K562 (cell line): ENCODE measurements at regions of chr2 and their contacts with region 1.

Region 1: DNA sequence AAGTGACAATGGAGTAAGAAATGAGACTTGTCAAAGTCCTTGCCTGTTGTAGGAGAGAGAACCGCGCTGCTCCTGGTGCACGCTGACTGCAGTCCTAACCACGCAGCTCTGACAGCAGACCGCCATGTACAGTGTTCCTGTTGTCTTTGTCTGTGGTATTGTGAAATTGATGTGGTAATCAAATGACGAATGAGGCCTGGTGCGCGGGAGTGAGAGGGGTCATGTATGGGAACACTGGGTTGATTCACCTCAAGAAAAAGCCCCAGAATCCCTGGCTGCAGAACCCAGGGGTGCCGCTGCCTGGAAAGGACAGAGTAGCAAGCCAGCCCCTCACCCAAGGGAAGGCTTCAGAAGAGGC is 64.0 kb downstream of the INPP4A start:
- DNase-seq: peak; percentile 44 to 71 (median 50)
- ATAC-seq: peak; percentile 66
- H3K4me3 ChIP-seq: peak overlapping the region; percentile 17; the same call in 1 of the 2 replicates
- H3K27ac ChIP-seq: peak overlapping the region; percentile 93
- H3K4me1 ChIP-seq: peaks cover 54 to 66% of the 10 kb centered on the region in 2 experiments
- H3K27me3 ChIP-seq: no peaks in the 10 kb centered on the region
- CTCF ChIP-seq: no peak
- EP300 ChIP-seq: no peak
- POLR2A ChIP-seq: no peak
- RAD21 ChIP-seq: no peak

Region 2: GRCh38 chr2:98444436-98445176 is 64.1 kb before region 1 on chr2 and contains the start of gene INPP4A:
- CTCF ChIA-PET with region 1: no interaction called
- POLR2A ChIA-PET with region 1: no interaction called
- in situ Hi-C with region 1: no loop called
- intact Hi-C with region 1: loop called (anchors 5 kb)
- DNase-seq: peak; percentile 83 to 95 (median 94)
- ATAC-seq: peak; percentile 85
- H3K4me3 ChIP-seq: peak within 1 kb of the TSS; percentile 66
- H3K27ac ChIP-seq: peak within 1 kb of the TSS; percentile 57; the same call in 2 of the 3 replicates
- H3K4me1 ChIP-seq: peaks cover 16 to 27% of the 10 kb centered on the region in 2 experiments; a peak in 4 of 5 replicates
- H3K27me3 ChIP-seq: no peaks in the 10 kb centered on the region
- CTCF ChIP-seq: peak in 1 of 3 experiments; percentile 39; a peak in 1 of 6 replicates
- EP300 ChIP-seq: no peak
- POLR2A ChIP-seq: 0 out of 2 replicates have a peak, but pooled peaks have one; percentile 42
- RAD21 ChIP-seq: peak in 1 of 2 experiments; percentile 23; a peak in 2 of 4 replicates
- polyA plus RNA-seq, gene INPP4A: 1.8 to 2.5 TPM

Region 3: DNA sequence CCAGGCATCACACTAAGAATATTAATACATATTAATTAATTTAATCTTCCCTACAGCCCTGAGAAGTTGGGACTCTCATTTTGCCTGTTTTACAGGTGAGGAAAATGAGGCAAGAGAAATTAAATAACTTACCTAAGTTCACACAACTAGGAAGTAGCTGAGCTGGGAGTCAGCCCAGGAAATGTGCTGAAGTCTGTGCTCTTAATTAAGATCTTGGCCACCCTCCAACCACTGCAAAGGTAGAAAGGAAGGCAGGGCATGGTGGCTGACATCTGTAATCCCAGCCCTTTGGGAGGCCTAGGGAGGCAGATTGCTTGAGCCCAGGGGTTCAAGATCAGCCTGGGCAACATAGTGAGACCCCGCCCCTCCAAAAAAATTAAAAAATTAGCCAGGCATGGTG is 235.1 kb after region 1 on chr2:
- CTCF ChIA-PET with region 1: no interaction called
- POLR2A ChIA-PET with region 1: no interaction called
- in situ Hi-C with region 1: no loop called
- intact Hi-C with region 1: no loop called
- DNase-seq: no peak
- ATAC-seq: no peak
- H3K4me3 ChIP-seq: no peak overlapping the region
- H3K27ac ChIP-seq: no peak overlapping the region
- H3K4me1 ChIP-seq: no peaks in the 10 kb centered on the region; a peak in 1 of 5 replicates
- H3K27me3 ChIP-seq: peaks cover 5 to 16% of the 10 kb centered on the region in 2 experiments; a peak in 4 of 5 replicates
- CTCF ChIP-seq: no peak
- EP300 ChIP-seq: no peak
- POLR2A ChIP-seq: no peak
- RAD21 ChIP-seq: no peak